Gastrocnemius medialis (tissue), 4 donors: ENCODE measurements at regions of chr10 and their contacts with region 1.

Region 1: GRCh38 chr10:132331526-132332432 is at the start of gene LRRC27:
- DNase-seq: peak; percentile 98
- ATAC-seq: peak; percentile 88 to 94
- H3K4me3 ChIP-seq: peak within 1 kb of the TSS; percentile 63 to 95 (median 92)
- H3K27ac ChIP-seq: peak within 1 kb of the TSS; percentile 89 to 91 (median 89)
- H3K4me1 ChIP-seq: peaks cover 30 to 34% of the 10 kb centered on the region in 2 donors
- H3K27me3 ChIP-seq: no peaks in the 10 kb centered on the region
- CTCF ChIP-seq: no peak
- POLR2A ChIP-seq: peak; percentile 53 to 69
- total RNA-seq, gene LRRC27: 1.0 to 7.0 (median 4.1) TPM

Region 2: DNA sequence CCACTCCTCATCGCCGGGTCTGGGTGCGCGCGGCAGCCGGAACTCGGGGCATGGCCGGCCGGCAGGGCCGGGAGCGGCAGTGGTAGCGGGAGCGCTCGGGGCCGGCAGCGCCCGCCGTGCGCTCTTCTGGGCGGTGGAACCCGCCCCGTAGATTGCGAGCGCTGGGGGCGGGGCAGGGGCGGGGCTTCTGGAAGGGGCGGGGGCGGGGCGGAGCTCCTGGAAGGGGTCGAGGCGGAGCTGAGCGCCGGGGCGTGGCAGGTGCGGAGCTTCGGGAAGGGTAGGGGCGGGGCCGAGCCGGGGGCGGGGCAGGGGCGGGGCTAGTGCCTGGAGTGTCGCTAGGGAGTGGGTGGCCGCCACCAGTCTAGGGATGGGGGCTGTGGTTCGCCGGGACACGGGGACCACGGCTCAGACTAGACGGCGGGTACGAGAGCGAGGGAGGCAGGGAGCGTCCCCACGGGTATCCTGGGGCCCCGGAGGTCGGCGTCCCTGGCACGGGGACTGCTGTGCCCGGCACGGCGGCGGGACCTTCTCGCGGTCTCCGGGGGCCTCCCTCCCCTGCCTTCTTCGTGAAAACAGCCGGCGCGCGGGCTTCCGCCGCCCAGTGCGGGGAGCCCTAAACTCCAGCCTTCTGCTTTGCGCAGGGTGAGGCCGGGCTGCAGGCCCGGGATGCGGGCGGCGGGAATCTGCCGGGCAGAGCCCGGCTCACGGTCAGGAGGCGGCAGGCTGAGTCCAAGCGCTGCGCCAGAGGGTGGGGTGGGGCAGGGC is 23.8 kb before region 1 on chr10 and contains the start of gene STK32C:
- in situ Hi-C with region 1: no loop called
- intact Hi-C with region 1: loop called (anchors 1 kb)
- DNase-seq: peak; percentile 85 to 87
- ATAC-seq: peak; percentile 91 to 93
- H3K4me3 ChIP-seq: peak within 1 kb of the TSS; percentile 84 to 92 (median 90)
- H3K27ac ChIP-seq: peak within 1 kb of the TSS; percentile 80 to 85 (median 82)
- H3K4me1 ChIP-seq: peaks cover 0 to 14% of the 10 kb centered on the region in 2 donors
- H3K27me3 ChIP-seq: peaks cover 7 to 14% (median 12%) of the 10 kb centered on the region in 3 donors
- CTCF ChIP-seq: no peak
- POLR2A ChIP-seq: peak; percentile 59 to 75
- total RNA-seq, gene STK32C: 3.7 to 13.9 (median 6.7) TPM

Region 3: DNA sequence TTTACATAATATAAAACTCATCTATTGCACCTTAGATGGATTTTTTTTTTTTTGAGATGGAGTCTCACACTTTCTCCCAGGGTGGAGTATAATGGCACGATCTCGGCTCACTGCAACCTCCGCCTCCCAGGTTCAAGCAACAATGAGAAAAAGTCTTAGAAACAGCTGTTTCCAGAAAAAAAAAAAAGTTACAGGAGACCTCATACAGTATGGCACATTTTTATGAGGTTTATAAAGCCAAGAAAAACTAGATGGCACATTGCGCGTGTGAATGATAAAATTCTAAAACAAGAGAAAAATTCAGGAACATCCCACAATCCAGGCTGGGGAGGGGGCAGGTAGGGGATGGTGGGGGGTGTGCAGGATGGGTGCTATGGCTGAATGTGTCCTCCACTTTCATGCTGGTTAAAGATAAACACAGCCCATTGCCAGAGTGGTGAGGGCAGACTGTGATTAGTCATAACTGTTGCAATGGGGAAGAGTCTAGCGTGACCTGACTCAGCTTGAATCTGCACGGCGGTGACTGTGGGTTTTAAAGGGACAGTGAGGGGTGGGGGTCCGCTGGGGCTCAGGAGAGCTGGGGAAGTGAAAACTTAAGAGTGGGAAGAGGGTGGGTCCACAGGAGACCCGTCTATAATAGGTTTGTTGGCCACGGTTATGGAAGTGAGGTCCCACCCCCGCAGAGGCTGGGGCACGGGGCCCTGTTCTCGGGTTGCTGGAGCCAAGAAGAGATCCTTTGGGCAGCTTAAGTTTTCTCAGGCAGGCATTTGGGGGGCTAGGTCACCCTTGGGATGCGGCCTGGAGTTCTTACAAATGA is 11.7 kb before region 1 on chr10:
- in situ Hi-C with region 1: no loop called
- intact Hi-C with region 1: loop called (anchors 1 kb)
- DNase-seq: peak; percentile 43 to 69
- ATAC-seq: peak; percentile 99
- H3K4me3 ChIP-seq: peak overlapping the region; percentile 5 to 42 (median 26)
- H3K27ac ChIP-seq: peak overlapping the region in 3 of 4 donors; percentile 9 to 57 (median 57)
- H3K4me1 ChIP-seq: peaks cover 3 to 11% of the 10 kb centered on the region in 2 donors
- H3K27me3 ChIP-seq: no peaks in the 10 kb centered on the region
- CTCF ChIP-seq: no peak
- POLR2A ChIP-seq: no peak